HCT116 (cell line): ENCODE measurements at regions of chr1 and their contacts with region 1.

Region 1: GRCh38 chr1:198359024-198359653 is 181.3 kb downstream of the ATP6V1G3 start:
- DNase-seq: peak; percentile 27
- ATAC-seq: peak; percentile 78
- H3K4me3 ChIP-seq: no peak overlapping the region
- H3K27ac ChIP-seq: no peak overlapping the region
- H3K4me1 ChIP-seq: no peaks in the 10 kb centered on the region
- H3K27me3 ChIP-seq: no peaks in the 10 kb centered on the region
- CTCF ChIP-seq: peak; percentile 54 to 77 (median 60); a peak in 4 of 6 replicates
- POLR2A ChIP-seq: no peak
- RAD21 ChIP-seq: peak; percentile 61

Region 2: DNA sequence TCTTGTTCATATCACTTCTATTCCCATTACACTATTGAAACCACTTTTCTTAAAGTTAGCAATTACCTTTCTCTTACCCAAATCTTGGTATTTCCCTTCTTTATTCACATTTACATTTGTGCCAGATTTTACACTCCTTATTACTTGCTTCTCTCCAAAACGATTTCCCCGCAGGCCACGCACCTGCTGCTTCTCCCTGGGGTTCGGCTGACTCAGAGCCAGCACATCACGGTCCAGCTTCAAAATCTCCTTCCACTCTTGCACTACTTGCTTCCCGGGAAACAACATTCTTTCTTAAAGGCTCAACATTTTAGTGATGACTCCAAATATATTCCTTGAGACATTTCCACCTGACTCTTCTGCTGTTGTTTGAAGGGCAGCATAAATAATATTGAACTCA is 421.2 kb before region 1 on chr1:
- CTCF ChIA-PET with region 1: no interaction called
- POLR2A ChIA-PET with region 1: no interaction called
- RAD21 ChIA-PET with region 1: no interaction called
- intact Hi-C with region 1: loop called (anchors 10 kb)
- DNase-seq: no peak
- ATAC-seq: no peak
- H3K4me3 ChIP-seq: no peak overlapping the region
- H3K27ac ChIP-seq: no peak overlapping the region
- H3K4me1 ChIP-seq: no peaks in the 10 kb centered on the region
- H3K27me3 ChIP-seq: no peaks in the 10 kb centered on the region
- CTCF ChIP-seq: no peak
- POLR2A ChIP-seq: no peak
- RAD21 ChIP-seq: no peak

Region 3: GRCh38 chr1:198088360-198089071 is 270.6 kb before region 1 on chr1:
- CTCF ChIA-PET with region 1: no interaction called
- POLR2A ChIA-PET with region 1: no interaction called
- RAD21 ChIA-PET with region 1: no interaction called
- intact Hi-C with region 1: loop called (anchors 2 kb)
- DNase-seq: peak; percentile 28
- ATAC-seq: peak; percentile 78
- H3K4me3 ChIP-seq: no peak overlapping the region
- H3K27ac ChIP-seq: no peak overlapping the region
- H3K4me1 ChIP-seq: no peaks in the 10 kb centered on the region
- H3K27me3 ChIP-seq: no peaks in the 10 kb centered on the region
- CTCF ChIP-seq: peak; percentile 60 to 73 (median 63); a peak in 5 of 6 replicates
- POLR2A ChIP-seq: no peak
- RAD21 ChIP-seq: peak; percentile 73

Region 4: GRCh38 chr1:198205016-198205684 is 154.0 kb before region 1 on chr1:
- CTCF ChIA-PET with region 1: no interaction called
- POLR2A ChIA-PET with region 1: no interaction called
- RAD21 ChIA-PET with region 1: no interaction called
- intact Hi-C with region 1: loop called (anchors 5 kb)
- DNase-seq: no peak
- ATAC-seq: no peak
- H3K4me3 ChIP-seq: no peak overlapping the region
- H3K27ac ChIP-seq: no peak overlapping the region
- H3K4me1 ChIP-seq: no peaks in the 10 kb centered on the region
- H3K27me3 ChIP-seq: no peaks in the 10 kb centered on the region
- CTCF ChIP-seq: no peak
- POLR2A ChIP-seq: no peak
- RAD21 ChIP-seq: no peak

Region 5: GRCh38 chr1:198234520-198235251 is 124.5 kb before region 1 on chr1:
- CTCF ChIA-PET with region 1: no interaction called
- POLR2A ChIA-PET with region 1: no interaction called
- RAD21 ChIA-PET with region 1: no interaction called
- intact Hi-C with region 1: no loop called
- DNase-seq: no peak
- ATAC-seq: peak; percentile 78
- H3K4me3 ChIP-seq: peak overlapping the region; percentile 31 to 51
- H3K27ac ChIP-seq: peak overlapping the region; percentile 56
- H3K4me1 ChIP-seq: peaks cover 4 to 12% of the 10 kb centered on the region in 2 experiments; a peak in 2 of 4 replicates
- H3K27me3 ChIP-seq: no peaks in the 10 kb centered on the region
- CTCF ChIP-seq: no peak
- POLR2A ChIP-seq: no peak
- RAD21 ChIP-seq: no peak; the same call in 1 of the 2 replicates